ENCODE measurements at regions of chr18 and their contacts with region 1.

Region 1: DNA sequence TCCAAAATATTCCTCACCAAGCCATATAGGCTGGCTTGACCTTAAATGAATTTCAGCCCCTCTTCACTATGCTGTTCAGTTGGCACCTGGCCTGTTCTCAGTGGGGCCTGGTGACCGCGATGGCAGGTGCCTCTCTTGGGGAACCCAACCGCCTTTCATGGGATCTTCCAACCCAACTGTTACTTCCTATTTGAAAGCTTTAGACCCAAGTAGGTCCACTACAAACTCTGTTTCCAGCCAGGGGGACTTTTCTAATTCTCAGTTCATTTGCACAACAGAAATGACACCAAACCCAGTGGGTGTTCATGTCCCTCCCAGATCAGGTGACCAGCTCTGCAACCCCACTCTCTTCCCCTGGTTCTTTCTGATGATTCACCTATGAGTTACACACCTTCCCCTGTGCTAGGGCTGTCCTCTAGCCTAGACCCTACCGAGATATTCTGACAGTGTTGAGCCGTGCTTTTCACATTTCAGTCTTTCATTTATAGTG is 35.6 kb upstream of the NDUFV2 start:
- DNase-seq: no peak
- H3K4me3 Mint-ChIP-seq: no peak overlapping the region
- H3K27ac Mint-ChIP-seq: peak overlapping the region; percentile 43
- H3K4me1 Mint-ChIP-seq: peaks cover 30% of the 10 kb centered on the region
- H3K27me3 Mint-ChIP-seq: no peaks in the 10 kb centered on the region

Region 2: GRCh38 chr18:8988261-8988871 is 78.5 kb before region 1 on chr18:
- intact Hi-C with region 1: no loop called
- DNase-seq: peak; percentile 84
- H3K4me3 Mint-ChIP-seq: no peak overlapping the region
- H3K27ac Mint-ChIP-seq: no peak overlapping the region
- H3K4me1 Mint-ChIP-seq: no peaks in the 10 kb centered on the region
- H3K27me3 Mint-ChIP-seq: peaks cover 11% of the 10 kb centered on the region

Region 3: DNA sequence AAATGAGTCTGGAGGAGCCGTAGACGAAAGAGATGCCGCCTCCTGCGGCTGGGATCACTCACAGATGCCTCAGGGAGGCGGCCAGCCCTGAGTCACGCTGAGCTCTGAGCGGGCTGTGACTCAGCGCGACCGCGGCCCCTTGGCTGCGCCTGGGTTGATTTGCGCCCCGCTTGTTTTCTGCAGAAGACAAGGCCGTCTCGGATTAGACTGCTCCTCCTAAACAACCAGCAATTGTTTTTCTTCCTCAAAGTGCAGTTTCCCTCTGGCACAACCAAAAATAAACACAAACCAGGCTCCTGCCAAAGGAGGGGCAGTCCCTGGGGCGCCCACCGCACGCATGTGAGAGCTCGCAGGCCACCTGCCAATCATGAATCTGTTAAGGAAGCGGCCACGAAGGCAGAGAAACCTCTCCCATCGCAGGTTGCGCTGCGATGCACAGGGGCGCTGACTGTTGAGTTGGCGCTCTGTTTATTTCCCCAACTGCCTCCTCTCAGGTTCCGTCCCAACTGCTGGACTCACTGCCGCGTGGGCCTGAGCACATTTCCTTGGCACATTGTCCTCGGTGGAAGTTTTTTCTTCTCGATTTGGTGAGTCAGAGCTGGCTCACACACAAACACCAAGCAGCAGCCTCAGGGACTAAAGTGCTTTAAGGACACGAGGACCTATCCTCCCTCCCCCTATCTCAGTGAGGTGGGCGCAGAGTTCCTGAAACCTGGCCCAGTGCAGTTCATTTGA is 49.5 kb before region 1 on chr18:
- intact Hi-C with region 1: no loop called
- DNase-seq: peak; percentile 88
- H3K4me3 Mint-ChIP-seq: peak overlapping the region; percentile 78
- H3K27ac Mint-ChIP-seq: peak overlapping the region; percentile 86
- H3K4me1 Mint-ChIP-seq: peaks cover 11% of the 10 kb centered on the region
- H3K27me3 Mint-ChIP-seq: no peaks in the 10 kb centered on the region

Region 4: DNA sequence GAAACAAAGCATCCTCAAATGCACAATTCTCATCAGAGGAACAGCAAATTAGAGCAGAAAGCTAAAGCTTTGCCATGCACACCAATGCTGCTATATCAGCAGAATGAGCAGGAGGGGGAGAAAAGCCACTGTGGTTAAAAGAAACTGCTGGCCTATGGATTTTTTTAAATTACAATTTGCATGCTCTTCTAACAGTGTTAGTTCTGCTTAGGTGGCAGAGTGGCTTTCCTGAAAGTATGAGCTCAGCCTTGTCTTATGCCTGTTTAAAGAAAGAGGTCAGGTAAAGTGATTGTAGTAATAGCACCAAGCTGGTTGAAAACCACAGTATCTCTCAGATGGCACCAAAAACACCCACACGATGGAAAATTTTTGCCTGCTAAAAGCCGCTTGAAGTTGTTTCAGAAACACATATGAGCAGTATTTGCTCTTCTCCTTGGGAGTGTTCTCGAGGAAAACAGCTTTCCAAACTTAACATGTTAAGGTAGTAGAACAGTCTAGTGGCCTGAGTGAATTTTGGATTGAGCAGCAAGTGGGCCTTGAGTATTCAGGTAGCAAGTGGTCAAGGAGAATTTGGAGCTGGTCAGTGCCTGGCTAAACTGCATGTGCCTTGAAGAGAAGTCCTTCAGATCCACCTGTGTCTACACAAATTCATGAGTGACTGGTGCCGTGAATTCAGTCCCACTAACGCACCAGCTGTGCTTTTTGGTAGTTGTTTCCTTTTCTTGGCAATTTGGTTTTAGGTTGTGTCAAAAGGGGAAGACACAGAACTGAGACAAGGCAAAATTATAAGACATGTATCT is 16.0 kb after region 1 on chr18:
- intact Hi-C with region 1: no loop called
- DNase-seq: peak; percentile 86
- H3K4me3 Mint-ChIP-seq: peak overlapping the region; percentile 73
- H3K27ac Mint-ChIP-seq: peak overlapping the region; percentile 97
- H3K4me1 Mint-ChIP-seq: peaks cover 40% of the 10 kb centered on the region
- H3K27me3 Mint-ChIP-seq: no peaks in the 10 kb centered on the region

Region 5: GRCh38 chr18:9102508-9103375 is 35.9 kb after region 1 on chr18 and contains the start of gene NDUFV2:
- intact Hi-C with region 1: no loop called
- DNase-seq: peak; percentile 100
- H3K4me3 Mint-ChIP-seq: peak within 1 kb of the TSS; percentile 95
- H3K27ac Mint-ChIP-seq: peak within 1 kb of the TSS; percentile 98
- H3K4me1 Mint-ChIP-seq: peaks cover 54% of the 10 kb centered on the region
- H3K27me3 Mint-ChIP-seq: no peaks in the 10 kb centered on the region
- total RNA-seq, gene NDUFV2: 357 and 360 TPM in 2 replicates

Region 6: GRCh38 chr18:9516437-9517064 is 449.7 kb after region 1 on chr18:
- intact Hi-C with region 1: loop called (anchors 2 kb)
- DNase-seq: peak; percentile 73
- H3K4me3 Mint-ChIP-seq: no peak overlapping the region
- H3K27ac Mint-ChIP-seq: no peak overlapping the region
- H3K4me1 Mint-ChIP-seq: peaks cover 2% of the 10 kb centered on the region
- H3K27me3 Mint-ChIP-seq: no peaks in the 10 kb centered on the region

Measured in activated CD4-positive, alpha-beta T cell treated with anti-CD3 and anti-CD28 coated beads, Interleukin-2, amount 10 ng/mL, durations not matched to agents 24 days and 14 days (primary cell).